IMR-90 (cell line): ENCODE measurements at regions of chr15 and their contacts with region 1.

Region 1: GRCh38 chr15:26260517-26261133 is 397.5 kb upstream of the ATP10A start:
- DNase-seq: peak; percentile 22
- ATAC-seq: peak; percentile 72
- H3K4me3 ChIP-seq: no peak overlapping the region
- H3K27ac ChIP-seq: no peak overlapping the region
- H3K4me1 ChIP-seq: no peaks in the 10 kb centered on the region
- H3K27me3 ChIP-seq: no peaks in the 10 kb centered on the region
- CTCF ChIP-seq: peak; percentile 61
- POLR2A ChIP-seq: no peak
- RAD21 ChIP-seq: peak; percentile 68

Region 2: GRCh38 chr15:25171856-25172687 is 1088.6 kb before region 1 on chr15:
- CTCF ChIA-PET with region 1: no interaction called
- POLR2A ChIA-PET with region 1: no interaction called
- dilution Hi-C with region 1: no loop called
- in situ Hi-C with region 1: loop called (anchors 25 kb)
- intact Hi-C with region 1: no loop called
- DNase-seq: no peak
- ATAC-seq: no peak
- H3K4me3 ChIP-seq: no peak overlapping the region
- H3K27ac ChIP-seq: no peak overlapping the region
- H3K4me1 ChIP-seq: no peaks in the 10 kb centered on the region
- H3K27me3 ChIP-seq: no peaks in the 10 kb centered on the region
- CTCF ChIP-seq: no peak
- POLR2A ChIP-seq: no peak
- RAD21 ChIP-seq: no peak

Region 3: DNA sequence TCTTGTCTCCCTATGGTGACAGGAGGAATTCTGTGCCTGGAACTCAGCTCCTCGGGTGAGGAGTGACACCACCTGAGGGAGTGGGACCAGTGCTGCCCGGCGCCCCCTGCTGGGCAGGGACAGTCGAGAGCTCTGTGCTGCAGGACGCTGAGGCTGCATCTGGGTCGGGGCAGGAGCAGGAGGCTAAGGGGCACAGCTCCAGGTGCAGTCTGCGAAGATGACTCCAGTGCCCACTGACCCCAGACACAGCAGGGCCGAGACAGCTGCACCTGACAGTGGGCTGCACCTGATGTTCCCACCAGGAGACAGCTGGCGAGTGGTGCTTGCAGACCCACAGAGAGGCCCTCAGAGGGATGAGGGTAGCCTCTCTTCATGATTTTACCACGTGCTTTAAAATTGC is 550.4 kb before region 1 on chr15:
- CTCF ChIA-PET with region 1: no interaction called
- POLR2A ChIA-PET with region 1: no interaction called
- dilution Hi-C with region 1: no loop called
- in situ Hi-C with region 1: loop called (anchors 25 kb)
- intact Hi-C with region 1: no loop called
- DNase-seq: no peak
- ATAC-seq: peak; percentile 65
- H3K4me3 ChIP-seq: no peak overlapping the region
- H3K27ac ChIP-seq: no peak overlapping the region
- H3K4me1 ChIP-seq: peaks cover 2% of the 10 kb centered on the region; the same call in 1 of the 2 replicates
- H3K27me3 ChIP-seq: no peaks in the 10 kb centered on the region
- CTCF ChIP-seq: peak; percentile 43; the same call in 1 of the 2 replicates
- POLR2A ChIP-seq: no peak
- RAD21 ChIP-seq: peak; percentile 35; the same call in 1 of the 2 replicates

Region 4: GRCh38 chr15:26037369-26037768 is 223.3 kb before region 1 on chr15:
- CTCF ChIA-PET with region 1: interaction called, 3 read pairs
- POLR2A ChIA-PET with region 1: no interaction called
- dilution Hi-C with region 1: no loop called
- in situ Hi-C with region 1: loop called (anchors 25 kb)
- intact Hi-C with region 1: loop called (anchors 5 kb)
- DNase-seq: no peak
- ATAC-seq: no peak
- H3K4me3 ChIP-seq: no peak overlapping the region
- H3K27ac ChIP-seq: no peak overlapping the region
- H3K4me1 ChIP-seq: no peaks in the 10 kb centered on the region
- H3K27me3 ChIP-seq: peaks cover 2% of the 10 kb centered on the region; the same call in 1 of the 2 replicates
- CTCF ChIP-seq: no peak
- POLR2A ChIP-seq: no peak
- RAD21 ChIP-seq: peak; percentile 25; the same call in 1 of the 2 replicates

Region 5: GRCh38 chr15:26365077-26365476 is 104.5 kb after region 1 on chr15:
- CTCF ChIA-PET with region 1: no interaction called
- POLR2A ChIA-PET with region 1: no interaction called
- dilution Hi-C with region 1: no loop called
- in situ Hi-C with region 1: no loop called
- intact Hi-C with region 1: no loop called
- DNase-seq: no peak
- ATAC-seq: no peak
- H3K4me3 ChIP-seq: no peak overlapping the region
- H3K27ac ChIP-seq: no peak overlapping the region
- H3K4me1 ChIP-seq: no peaks in the 10 kb centered on the region
- H3K27me3 ChIP-seq: no peaks in the 10 kb centered on the region
- CTCF ChIP-seq: no peak
- POLR2A ChIP-seq: no peak
- RAD21 ChIP-seq: no peak

Region 6: DNA sequence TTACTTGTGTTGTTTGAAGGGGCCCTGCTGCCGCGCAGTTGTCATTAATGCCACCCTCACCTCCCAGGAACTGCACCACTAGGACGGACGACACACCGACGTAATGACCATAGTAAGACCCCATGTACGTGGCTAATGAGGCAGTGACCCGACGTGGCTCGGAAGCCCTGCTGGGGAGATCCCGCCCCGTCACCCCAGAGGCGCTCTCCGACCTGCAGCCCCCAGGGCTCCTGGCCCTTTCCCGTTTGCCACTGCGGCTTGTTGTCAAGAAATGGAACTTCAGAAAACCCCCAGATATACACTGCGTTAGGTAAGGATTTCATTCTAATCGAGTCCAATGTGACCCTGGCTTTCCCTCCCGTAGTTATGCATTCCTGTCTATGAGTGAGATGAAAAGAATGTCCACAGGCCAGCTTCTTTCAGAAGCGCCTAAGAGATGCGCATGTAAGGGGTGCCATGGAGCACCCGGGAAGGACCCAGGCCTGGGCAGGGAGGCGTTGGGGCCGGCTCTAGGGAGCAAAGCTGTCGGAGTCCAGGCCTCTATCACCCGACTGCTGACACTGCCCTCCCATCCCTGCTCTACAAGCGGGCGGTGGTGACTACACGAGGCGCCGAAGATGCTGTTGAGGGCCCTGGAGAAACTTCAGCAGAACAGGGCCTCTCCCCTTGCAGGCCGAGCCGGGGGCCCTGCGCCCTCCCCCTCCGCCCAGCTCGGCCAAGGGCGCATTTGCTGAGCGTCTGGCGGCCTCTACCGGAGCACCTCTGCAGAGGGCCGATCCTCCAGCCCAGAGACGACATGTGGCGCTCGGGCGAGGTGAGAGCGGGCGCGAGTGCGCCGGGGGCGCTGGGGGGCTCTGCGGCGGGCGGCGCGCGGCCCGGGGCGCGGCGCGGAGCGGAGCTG is 605.9 kb after region 1 on chr15 and contains the start of gene GABRA5:
- CTCF ChIA-PET with region 1: no interaction called
- POLR2A ChIA-PET with region 1: no interaction called
- dilution Hi-C with region 1: no loop called
- in situ Hi-C with region 1: no loop called
- intact Hi-C with region 1: no loop called
- DNase-seq: peak; percentile 20
- ATAC-seq: peak; percentile 68
- H3K4me3 ChIP-seq: no peak within 1 kb of the TSS
- H3K27ac ChIP-seq: no peak within 1 kb of the TSS
- H3K4me1 ChIP-seq: no peaks in the 10 kb centered on the region
- H3K27me3 ChIP-seq: peaks cover 16% of the 10 kb centered on the region
- CTCF ChIP-seq: peak; percentile 15; the same call in 1 of the 2 replicates
- POLR2A ChIP-seq: no peak
- RAD21 ChIP-seq: peak; percentile 23; the same call in 1 of the 2 replicates
- total RNA-seq, gene GABRA5: 7.3 and 8.3 TPM in 2 replicates